ENCODE measurements at regions of chr5 and their contacts with region 1.

Region 1: DNA sequence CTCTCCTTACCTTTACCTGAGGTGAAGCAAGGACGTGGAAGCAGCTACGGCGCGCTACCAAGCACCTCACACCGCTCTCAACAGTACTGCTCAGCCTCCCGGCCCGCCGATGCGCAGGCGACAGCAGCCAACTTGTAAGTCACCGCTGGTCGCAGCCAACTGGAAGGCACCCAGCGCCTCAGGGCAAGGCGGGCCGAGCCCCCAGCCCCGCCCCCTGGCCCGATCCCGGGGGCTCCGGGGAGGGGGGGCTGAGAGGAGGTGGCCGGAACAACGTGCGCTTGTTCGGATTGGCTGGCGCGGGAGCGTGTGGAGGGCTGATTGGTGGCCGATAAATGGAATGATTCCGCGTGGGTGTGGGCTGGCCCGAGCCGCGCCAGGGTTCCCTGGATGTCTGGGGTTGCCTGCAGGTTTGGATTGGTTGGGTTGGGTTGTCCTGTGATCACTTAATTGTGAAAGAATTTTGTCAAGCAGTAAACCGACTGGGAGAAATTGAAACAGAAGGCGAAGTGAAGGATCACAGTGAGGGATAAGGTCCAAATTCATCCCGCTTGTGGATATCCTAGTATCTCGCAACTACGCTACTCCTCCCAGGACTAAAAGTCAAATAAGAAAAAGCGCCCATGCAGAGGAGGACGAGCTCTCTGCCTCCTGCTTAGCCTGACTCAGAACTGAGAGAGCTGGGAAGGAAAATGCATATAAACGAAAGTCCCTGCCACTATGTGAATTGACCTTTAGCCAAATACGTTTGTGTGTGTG is at the start of gene STARD4:
- DNase-seq: peak; percentile 92
- ATAC-seq: peak; percentile 88
- H3K4me3 ChIP-seq: peak within 1 kb of the TSS; percentile 85
- H3K27ac ChIP-seq: peak within 1 kb of the TSS; percentile 97
- H3K4me1 ChIP-seq: 0 out of 2 replicates have a peak, but pooled peaks cover under 1% of the 10 kb centered on the region
- H3K27me3 ChIP-seq: no peaks in the 10 kb centered on the region
- CTCF ChIP-seq: no peak
- EP300 ChIP-seq: 0 out of 4 replicates have a peak, but pooled peaks of 1 of the 2 experiments have one; percentile 6
- POLR2A ChIP-seq: peak; percentile 99
- RAD21 ChIP-seq: no peak
- polyA plus RNA-seq, gene STARD4: 41.9 to 53.3 TPM

Region 2: GRCh38 chr5:110751902-110752762 is 760.4 kb before region 1 on chr5:
- CTCF ChIA-PET with region 1: interaction called, 3 read pairs
- POLR2A ChIA-PET with region 1: no interaction called
- RAD21 ChIA-PET with region 1: no interaction called
- SMC1A ChIA-PET with region 1: no interaction called
- in situ Hi-C with region 1: loop called (anchors 25 kb)
- intact Hi-C with region 1: loop called (anchors 5 kb)
- DNase-seq: peak; percentile 96
- ATAC-seq: peak; percentile 94
- H3K4me3 ChIP-seq: peak overlapping the region; percentile 46; the same call in 1 of the 2 replicates
- H3K27ac ChIP-seq: peak overlapping the region; percentile 96
- H3K4me1 ChIP-seq: peaks cover 30% of the 10 kb centered on the region
- H3K27me3 ChIP-seq: no peaks in the 10 kb centered on the region
- CTCF ChIP-seq: no peak
- EP300 ChIP-seq: peak; percentile 94 to 99
- POLR2A ChIP-seq: peak; percentile 57
- RAD21 ChIP-seq: no peak

Region 3: GRCh38 chr5:111254613-111255012 is 257.9 kb before region 1 on chr5:
- CTCF ChIA-PET with region 1: no interaction called
- POLR2A ChIA-PET with region 1: interaction called, 5 read pairs
- RAD21 ChIA-PET with region 1: interaction called, 10 read pairs
- SMC1A ChIA-PET with region 1: interaction called, 7 read pairs
- in situ Hi-C with region 1: no loop called
- intact Hi-C with region 1: no loop called
- DNase-seq: peak; percentile 95
- ATAC-seq: peak; percentile 81
- H3K4me3 ChIP-seq: 0 out of 2 replicates have a peak overlapping the region, but pooled peaks have one; percentile 44
- H3K27ac ChIP-seq: peak overlapping the region; percentile 83
- H3K4me1 ChIP-seq: peaks cover 46% of the 10 kb centered on the region
- H3K27me3 ChIP-seq: no peaks in the 10 kb centered on the region
- CTCF ChIP-seq: no peak
- EP300 ChIP-seq: peak; percentile 94
- POLR2A ChIP-seq: peak; percentile 66
- RAD21 ChIP-seq: peak; percentile 30; the same call in 1 of the 2 replicates

Region 4: DNA sequence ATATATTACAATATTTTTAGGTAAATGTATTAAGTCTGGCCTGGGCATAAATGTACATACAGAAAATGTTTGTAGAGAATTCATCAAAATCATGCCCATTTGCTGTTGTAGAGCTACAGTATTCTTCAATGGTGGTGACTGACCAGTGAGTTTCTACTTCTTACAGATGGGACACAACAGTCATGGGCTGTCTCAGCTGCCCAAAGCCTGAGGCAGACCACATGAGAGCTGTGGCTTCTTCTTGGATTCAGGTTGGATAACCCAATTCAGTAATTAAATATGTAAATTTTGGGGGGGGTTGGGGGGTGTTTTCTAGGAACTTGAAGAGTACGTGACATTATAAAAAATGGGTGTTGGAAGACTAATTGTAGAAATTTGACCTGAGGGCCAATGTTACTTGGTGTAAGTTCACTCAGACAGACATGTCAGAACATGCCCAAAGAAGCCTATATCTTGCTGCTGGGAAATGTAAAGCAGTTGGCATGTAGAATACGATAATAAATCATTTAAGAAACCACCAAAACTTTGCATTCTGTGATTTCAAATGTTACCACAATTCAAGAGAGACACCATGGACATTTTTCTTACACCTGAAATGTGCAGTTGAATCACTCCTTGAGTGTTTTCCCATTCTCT is 18.1 kb before region 1 on chr5:
- CTCF ChIA-PET with region 1: interaction called, 45 read pairs
- POLR2A ChIA-PET with region 1: interaction called, 34 read pairs
- RAD21 ChIA-PET with region 1: interaction called, 55 read pairs
- SMC1A ChIA-PET with region 1: interaction called, 46 read pairs
- in situ Hi-C with region 1: no loop called
- intact Hi-C with region 1: no loop called
- DNase-seq: peak; percentile 35
- ATAC-seq: peak; percentile 50
- H3K4me3 ChIP-seq: no peak overlapping the region
- H3K27ac ChIP-seq: peak overlapping the region; percentile 62
- H3K4me1 ChIP-seq: peaks cover 15% of the 10 kb centered on the region; the same call in 1 of the 2 replicates
- H3K27me3 ChIP-seq: no peaks in the 10 kb centered on the region
- CTCF ChIP-seq: no peak
- EP300 ChIP-seq: peak in 1 of 2 experiments; percentile 14; a peak in 1 of 4 replicates
- POLR2A ChIP-seq: no peak
- RAD21 ChIP-seq: no peak

Region 5: DNA sequence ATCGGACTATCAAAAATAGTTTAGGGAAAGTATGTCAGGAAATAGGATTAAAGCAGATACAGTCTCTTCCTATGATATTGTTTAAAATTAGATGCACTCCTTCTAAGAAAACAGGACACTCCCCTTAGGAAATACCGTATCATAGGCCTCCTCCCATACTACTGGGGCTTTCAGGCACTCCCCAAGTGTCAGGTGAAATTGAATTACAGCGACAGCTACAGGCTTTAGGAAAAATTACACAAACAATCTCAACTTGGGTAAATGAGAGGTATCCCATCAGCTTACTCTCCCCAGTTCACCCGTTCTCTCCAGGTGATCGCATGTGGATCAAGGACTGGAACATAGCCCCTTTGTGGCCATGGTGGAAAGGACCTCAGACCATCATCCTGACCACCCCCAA is 1017.0 kb after region 1 on chr5:
- CTCF ChIA-PET with region 1: no interaction called
- POLR2A ChIA-PET with region 1: no interaction called
- RAD21 ChIA-PET with region 1: no interaction called
- SMC1A ChIA-PET with region 1: no interaction called
- in situ Hi-C with region 1: no loop called
- intact Hi-C with region 1: loop called (anchors 10 kb)
- DNase-seq: no peak
- ATAC-seq: peak; percentile 71
- H3K4me3 ChIP-seq: no peak overlapping the region
- H3K27ac ChIP-seq: no peak overlapping the region
- H3K4me1 ChIP-seq: peaks cover 26% of the 10 kb centered on the region
- H3K27me3 ChIP-seq: no peaks in the 10 kb centered on the region
- CTCF ChIP-seq: peak; percentile 57 to 61 (median 58); a peak in 5 of 6 replicates
- EP300 ChIP-seq: no peak
- POLR2A ChIP-seq: no peak
- RAD21 ChIP-seq: peak; percentile 65

Measured in GM12878 (cell line).